H1 (cell line): ENCODE measurements at regions of chr9 and their contacts with region 1.

Region 1: DNA sequence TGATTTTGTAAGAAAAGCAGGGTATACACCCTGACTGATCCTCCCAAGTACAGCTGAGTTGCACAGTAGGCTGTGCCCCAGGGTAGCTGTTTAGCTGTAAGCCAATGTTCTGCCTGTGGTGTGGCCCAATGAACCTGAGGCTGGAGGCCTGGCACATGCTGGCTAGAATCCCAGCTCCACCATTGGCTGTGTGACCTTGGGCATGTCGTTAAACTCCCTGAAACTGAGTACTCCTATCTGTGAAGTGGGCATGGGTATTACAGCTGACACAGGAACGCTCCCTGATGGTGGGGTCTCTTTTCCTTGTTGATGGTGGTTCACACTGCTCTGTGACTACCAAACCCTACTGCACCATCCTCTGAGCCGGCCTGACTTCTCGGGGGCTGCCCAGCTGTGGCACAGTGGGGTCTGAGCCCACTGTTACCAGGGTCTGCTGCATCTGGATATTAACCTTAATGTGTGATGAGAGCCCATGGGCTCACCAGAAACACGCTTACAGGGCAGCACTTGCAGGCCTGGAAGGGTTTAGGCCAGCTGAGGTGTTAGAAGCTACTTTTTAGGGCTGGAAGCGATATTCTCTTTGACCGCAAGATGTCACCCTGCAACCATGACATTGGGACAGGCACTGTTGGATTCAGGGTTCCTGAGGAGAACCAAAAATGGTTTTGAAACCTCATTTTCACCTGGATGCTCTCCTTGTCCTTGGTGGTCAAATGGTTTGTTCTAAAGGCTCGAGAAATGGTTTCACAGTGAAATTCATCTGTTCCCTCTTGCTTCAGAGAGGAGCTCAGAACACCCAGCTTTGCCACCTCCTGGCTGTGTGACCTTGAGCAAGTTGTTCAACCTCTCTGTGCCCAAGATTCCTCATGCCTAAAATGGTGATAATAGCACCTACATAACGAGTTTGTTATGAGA is 6.8 kb upstream of the GADD45G start:
- DNase-seq: peak in 1 of 2 experiments; percentile 82
- H3K4me3 ChIP-seq: no peak overlapping the region
- H3K27ac ChIP-seq: no peak overlapping the region
- H3K4me1 ChIP-seq: peaks cover 4 to 10% (median 6%) of the 10 kb centered on the region in 4 experiments
- H3K27me3 ChIP-seq: no peaks in the 10 kb centered on the region
- CTCF ChIP-seq: peak; percentile 68 to 92 (median 92)
- EP300 ChIP-seq: no peak
- POLR2A ChIP-seq: no peak
- RAD21 ChIP-seq: peak; percentile 99 to 100

Region 2: DNA sequence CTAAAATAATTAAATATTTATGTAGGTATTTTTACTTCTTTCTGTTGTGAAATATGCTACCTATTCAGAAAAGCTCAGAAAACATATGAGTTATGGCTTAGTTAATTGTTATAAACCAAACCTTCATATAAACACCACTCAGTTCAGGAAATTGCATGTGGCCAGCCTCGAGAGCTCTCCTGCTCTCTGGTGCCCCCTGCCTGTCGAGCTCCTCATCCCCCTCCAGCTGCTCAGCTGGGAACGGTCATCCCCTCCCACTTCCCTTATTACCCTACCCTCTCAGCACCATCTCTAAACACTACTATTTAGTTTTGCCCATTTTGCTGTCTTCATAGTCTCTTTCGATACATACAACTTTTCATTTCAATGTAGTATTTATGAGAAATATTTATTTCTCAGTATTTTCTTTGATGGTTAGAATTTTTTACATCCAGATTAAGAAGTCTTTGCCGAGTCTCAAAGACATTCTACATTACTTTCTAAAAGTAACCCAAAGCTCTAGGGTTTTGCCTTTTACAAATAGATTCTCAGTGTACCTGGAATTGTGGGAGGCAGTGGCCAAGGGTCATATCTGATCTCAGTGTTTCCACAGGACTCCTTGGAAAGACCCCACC is 48.8 kb before region 1 on chr9:
- CTCF ChIA-PET with region 1: interaction called, 14 read pairs
- POLR2A ChIA-PET with region 1: no interaction called
- DNase-seq: peak; percentile 29 to 90
- H3K4me3 ChIP-seq: no peak overlapping the region
- H3K27ac ChIP-seq: no peak overlapping the region
- H3K4me1 ChIP-seq: peaks cover 0 to 11% (median 7%) of the 10 kb centered on the region in 4 experiments; a peak in 5 of 7 replicates
- H3K27me3 ChIP-seq: no peaks in the 10 kb centered on the region
- CTCF ChIP-seq: peak; percentile 81 to 97 (median 93)
- EP300 ChIP-seq: no peak
- POLR2A ChIP-seq: no peak
- RAD21 ChIP-seq: peak; percentile 84 to 85

Region 3: GRCh38 chr9:89576404-89576839 is 21.5 kb before region 1 on chr9:
- CTCF ChIA-PET with region 1: interaction called, 101 read pairs
- POLR2A ChIA-PET with region 1: interaction called, 6 read pairs
- DNase-seq: no peak
- H3K4me3 ChIP-seq: no peak overlapping the region
- H3K27ac ChIP-seq: no peak overlapping the region
- H3K4me1 ChIP-seq: no peaks in the 10 kb centered on the region
- H3K27me3 ChIP-seq: no peaks in the 10 kb centered on the region
- CTCF ChIP-seq: peak in 2 of 3 experiments; percentile 32 to 43; a peak in 2 of 4 replicates
- EP300 ChIP-seq: no peak
- POLR2A ChIP-seq: no peak
- RAD21 ChIP-seq: peak; percentile 56 to 65

Region 4: GRCh38 chr9:89719202-89719601 is 121.2 kb after region 1 on chr9:
- CTCF ChIA-PET with region 1: interaction called, 10 read pairs
- POLR2A ChIA-PET with region 1: no interaction called
- DNase-seq: no peak
- H3K4me3 ChIP-seq: no peak overlapping the region
- H3K27ac ChIP-seq: no peak overlapping the region
- H3K4me1 ChIP-seq: no peaks in the 10 kb centered on the region; a peak in 1 of 7 replicates
- H3K27me3 ChIP-seq: no peaks in the 10 kb centered on the region
- CTCF ChIP-seq: no peak
- EP300 ChIP-seq: no peak
- POLR2A ChIP-seq: no peak
- RAD21 ChIP-seq: no peak

Region 5: GRCh38 chr9:90086101-90086511 is 488.1 kb after region 1 on chr9:
- CTCF ChIA-PET with region 1: interaction called, 10 read pairs
- POLR2A ChIA-PET with region 1: no interaction called
- DNase-seq: no peak
- H3K4me3 ChIP-seq: no peak overlapping the region
- H3K27ac ChIP-seq: no peak overlapping the region
- H3K4me1 ChIP-seq: peaks cover 2 to 7% (median 3%) of the 10 kb centered on the region in 4 experiments
- H3K27me3 ChIP-seq: no peaks in the 10 kb centered on the region
- CTCF ChIP-seq: no peak
- EP300 ChIP-seq: no peak
- POLR2A ChIP-seq: no peak
- RAD21 ChIP-seq: no peak

Region 6: GRCh38 chr9:90102292-90102901 is 504.4 kb after region 1 on chr9:
- CTCF ChIA-PET with region 1: interaction called, 162 read pairs
- POLR2A ChIA-PET with region 1: interaction called, 4 read pairs
- DNase-seq: peak; percentile 53 to 70
- H3K4me3 ChIP-seq: no peak overlapping the region
- H3K27ac ChIP-seq: no peak overlapping the region
- H3K4me1 ChIP-seq: no peaks in the 10 kb centered on the region
- H3K27me3 ChIP-seq: no peaks in the 10 kb centered on the region; a peak in 2 of 7 replicates
- CTCF ChIP-seq: peak; percentile 76 to 92 (median 86)
- EP300 ChIP-seq: no peak
- POLR2A ChIP-seq: no peak
- RAD21 ChIP-seq: peak; percentile 97 to 98

Region 7: DNA sequence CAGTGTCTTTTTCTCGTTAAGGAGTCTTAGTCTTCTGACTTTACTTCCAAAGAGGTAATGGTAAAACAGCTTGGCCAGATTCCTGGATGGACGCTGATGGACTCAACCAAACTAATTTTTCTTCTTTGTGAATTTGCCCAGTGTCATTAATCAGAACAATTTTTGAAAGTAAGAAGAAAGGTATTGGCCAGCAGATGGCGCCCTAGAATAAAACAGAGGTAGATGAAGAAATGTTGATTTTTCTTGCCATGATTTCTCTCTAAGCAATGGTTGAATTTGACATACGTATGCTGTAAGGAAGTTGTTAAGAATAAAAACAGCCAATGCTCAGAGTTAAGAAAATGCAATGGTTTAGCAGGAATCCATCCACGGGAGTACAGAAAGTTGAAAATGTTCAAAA is 544.6 kb after region 1 on chr9:
- CTCF ChIA-PET with region 1: interaction called, 16 read pairs
- POLR2A ChIA-PET with region 1: no interaction called
- DNase-seq: peak in 1 of 2 experiments; percentile 71
- H3K4me3 ChIP-seq: no peak overlapping the region
- H3K27ac ChIP-seq: no peak overlapping the region
- H3K4me1 ChIP-seq: no peaks in the 10 kb centered on the region; a peak in 1 of 7 replicates
- H3K27me3 ChIP-seq: no peaks in the 10 kb centered on the region
- CTCF ChIP-seq: peak in 2 of 3 experiments; percentile 31 to 40; a peak in 2 of 4 replicates
- EP300 ChIP-seq: no peak
- POLR2A ChIP-seq: no peak
- RAD21 ChIP-seq: peak; percentile 59 to 63